Gastrocnemius medialis (tissue), 4 donors: ENCODE measurements at regions of chr19 and their contacts with region 1.

Region 1: GRCh38 chr19:50476224-50476942 is at the starts of genes EMC10 and GARIN5A:
- DNase-seq: peak; percentile 70 to 85
- ATAC-seq: peak; percentile 90 to 92
- H3K4me3 ChIP-seq: peak within 1 kb of the TSS; percentile 68 to 99 (median 82)
- H3K27ac ChIP-seq: peak within 1 kb of the TSS; percentile 67 to 88 (median 79)
- H3K4me1 ChIP-seq: peaks cover 13 to 18% of the 10 kb centered on the region in 2 donors
- H3K27me3 ChIP-seq: no peaks in the 10 kb centered on the region
- CTCF ChIP-seq: no peak
- POLR2A ChIP-seq: peak in 1 of 2 donors; percentile 60
- total RNA-seq, gene EMC10: 29.2 to 67.4 (median 45.4) TPM
- total RNA-seq, gene GARIN5A: 1.2 to 11.0 (median 1.9) TPM in 3 of 4 donors, not detected in the other

Region 2: GRCh38 chr19:50511068-50511822 is 34.9 kb after region 1 on chr19 and contains the start of gene JOSD2:
- in situ Hi-C with region 1: no loop called
- intact Hi-C with region 1: loop called (anchors 1 kb)
- DNase-seq: peak; percentile 95 to 98
- ATAC-seq: peak; percentile 92 to 94
- H3K4me3 ChIP-seq: peak within 1 kb of the TSS; percentile 87 to 92 (median 88)
- H3K27ac ChIP-seq: peak within 1 kb of the TSS; percentile 79 to 89 (median 85)
- H3K4me1 ChIP-seq: peaks cover 7 to 13% of the 10 kb centered on the region in 2 donors
- H3K27me3 ChIP-seq: peaks cover 0 to 4% (median 0%) of the 10 kb centered on the region in 3 donors
- CTCF ChIP-seq: peak in 2 of 5 experiments; percentile 21 to 22
- POLR2A ChIP-seq: peak; percentile 68 to 81
- total RNA-seq, gene JOSD2: 22.1 to 36.9 (median 27.8) TPM